ENCODE measurements at regions of chr16 and their contacts with region 1.

Region 1: DNA sequence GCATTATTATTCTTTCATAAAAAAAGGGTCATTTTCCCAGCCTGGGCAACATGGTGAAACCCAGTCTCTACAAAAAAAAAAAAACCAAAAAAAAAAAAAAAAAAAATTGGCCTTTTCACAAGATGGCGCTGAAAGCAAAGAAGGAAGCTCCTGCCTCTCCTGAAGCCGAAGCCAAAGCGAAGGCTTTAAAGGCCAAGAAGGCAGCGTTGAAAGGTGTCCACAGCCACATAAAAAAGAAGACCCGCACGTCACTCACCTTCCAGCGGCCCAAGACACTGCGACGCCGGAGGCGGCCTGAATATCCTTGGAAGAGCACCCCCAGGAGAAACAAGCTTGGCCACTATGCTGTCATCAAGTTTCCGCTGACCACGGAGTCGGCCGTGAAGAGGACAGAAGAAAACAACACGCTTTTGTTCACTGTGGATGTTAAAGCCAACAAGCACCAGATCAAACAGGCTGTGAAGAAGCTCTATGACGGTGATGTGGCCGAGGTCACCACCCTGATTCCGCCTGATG is 4.9 kb upstream of the PGAP6 start:
- DNase-seq: no peak

Region 2: GRCh38 chr16:471353-472198 is 84.9 kb after region 1 on chr16:
- intact Hi-C with region 1: no loop called
- DNase-seq: no peak

Region 3: GRCh38 chr16:648781-649589 is 262.3 kb after region 1 on chr16 and contains the start of gene WDR90:
- intact Hi-C with region 1: loop called in 1 of 2 experiments (anchors 5 kb)
- DNase-seq: peak; percentile 98
- total RNA-seq, gene WDR90: 13.4 to 14.9 TPM

Measured in posterior vena cava (tissue), 2 donors.